MCF 10A (cell line): ENCODE measurements at regions of chr17 and their contacts with region 1.

Region 1: GRCh38 chr17:40362696-40363110 is 1.8 kb downstream of the GJD3 start:
- DNase-seq: peak; percentile 74
- H3K4me3 Mint-ChIP-seq: peak overlapping the region; percentile 69
- H3K27ac Mint-ChIP-seq: no peak overlapping the region
- H3K4me1 Mint-ChIP-seq: peaks cover 11% of the 10 kb centered on the region
- H3K27me3 Mint-ChIP-seq: no peaks in the 10 kb centered on the region
- CTCF ChIP-seq: peak; percentile 72

Region 2: GRCh38 chr17:39621523-39622379 is 741.0 kb before region 1 on chr17:
- CTCF ChIA-PET with region 1: no interaction called
- POLR2A ChIA-PET with region 1: no interaction called
- intact Hi-C with region 1: no loop called
- DNase-seq: peak; percentile 85
- H3K4me3 Mint-ChIP-seq: peak overlapping the region; percentile 9
- H3K27ac Mint-ChIP-seq: no peak overlapping the region
- H3K4me1 Mint-ChIP-seq: peaks cover 9% of the 10 kb centered on the region
- H3K27me3 Mint-ChIP-seq: peaks cover 14% of the 10 kb centered on the region
- CTCF ChIP-seq: peak; percentile 100

Region 3: GRCh38 chr17:40399185-40399584 is 36.5 kb after region 1 on chr17:
- CTCF ChIA-PET with region 1: interaction called, 3 read pairs
- POLR2A ChIA-PET with region 1: no interaction called
- intact Hi-C with region 1: loop called (anchors 1 kb)
- DNase-seq: peak; percentile 61
- H3K4me3 Mint-ChIP-seq: no peak overlapping the region
- H3K27ac Mint-ChIP-seq: no peak overlapping the region
- H3K4me1 Mint-ChIP-seq: peaks cover 6% of the 10 kb centered on the region
- H3K27me3 Mint-ChIP-seq: no peaks in the 10 kb centered on the region
- CTCF ChIP-seq: peak; percentile 46

Region 4: DNA sequence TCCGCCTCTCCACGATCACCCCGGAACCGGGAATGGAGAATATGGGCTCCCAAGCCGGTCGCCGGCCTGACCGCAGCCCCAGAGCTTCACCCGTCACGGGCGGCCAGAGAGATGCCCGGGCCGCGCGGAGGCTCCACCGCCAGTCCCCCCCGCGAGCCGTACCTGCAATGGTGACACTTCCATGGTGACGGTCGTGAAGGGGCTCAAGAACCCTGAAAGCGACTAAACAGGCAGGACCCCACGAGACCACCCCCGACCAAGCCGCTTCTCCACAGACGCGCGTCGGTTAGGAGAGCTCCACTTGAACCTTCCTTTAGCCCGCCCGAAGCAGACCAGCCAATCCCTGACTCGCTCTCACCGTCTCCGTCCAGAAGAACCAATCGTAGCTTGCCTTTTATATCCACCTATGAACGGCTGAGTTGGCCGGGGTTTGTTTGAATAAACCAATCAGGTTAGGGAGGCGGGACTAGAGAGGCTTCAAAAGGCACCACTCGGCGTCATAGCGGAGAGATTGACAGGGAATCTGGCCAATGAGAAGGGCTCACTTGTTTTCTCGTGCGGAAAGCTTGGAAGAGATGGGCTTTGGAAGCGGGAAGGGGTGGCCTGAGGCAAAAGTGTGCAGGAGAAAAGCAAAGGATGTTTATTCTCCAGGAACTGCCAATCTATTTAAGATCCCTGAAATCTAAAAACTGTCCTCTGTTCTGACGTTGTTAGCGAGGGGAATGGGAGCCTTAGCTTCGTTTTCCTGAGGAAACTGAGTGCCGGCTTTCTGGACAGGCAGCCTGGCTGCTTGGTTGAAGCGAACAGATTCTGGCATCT is 55.1 kb after region 1 on chr17 and contains the start of gene TOP2A:
- CTCF ChIA-PET with region 1: interaction called, 23 read pairs
- POLR2A ChIA-PET with region 1: interaction called, 7 read pairs
- intact Hi-C with region 1: loop called (anchors 2 kb)
- DNase-seq: peak; percentile 100
- H3K4me3 Mint-ChIP-seq: peak within 1 kb of the TSS; percentile 96
- H3K27ac Mint-ChIP-seq: peak within 1 kb of the TSS; percentile 82
- H3K4me1 Mint-ChIP-seq: peaks cover 8% of the 10 kb centered on the region
- H3K27me3 Mint-ChIP-seq: no peaks in the 10 kb centered on the region
- CTCF ChIP-seq: no peak
- total RNA-seq, gene TOP2A: 100 and 151 TPM in 2 replicates

Region 5: DNA sequence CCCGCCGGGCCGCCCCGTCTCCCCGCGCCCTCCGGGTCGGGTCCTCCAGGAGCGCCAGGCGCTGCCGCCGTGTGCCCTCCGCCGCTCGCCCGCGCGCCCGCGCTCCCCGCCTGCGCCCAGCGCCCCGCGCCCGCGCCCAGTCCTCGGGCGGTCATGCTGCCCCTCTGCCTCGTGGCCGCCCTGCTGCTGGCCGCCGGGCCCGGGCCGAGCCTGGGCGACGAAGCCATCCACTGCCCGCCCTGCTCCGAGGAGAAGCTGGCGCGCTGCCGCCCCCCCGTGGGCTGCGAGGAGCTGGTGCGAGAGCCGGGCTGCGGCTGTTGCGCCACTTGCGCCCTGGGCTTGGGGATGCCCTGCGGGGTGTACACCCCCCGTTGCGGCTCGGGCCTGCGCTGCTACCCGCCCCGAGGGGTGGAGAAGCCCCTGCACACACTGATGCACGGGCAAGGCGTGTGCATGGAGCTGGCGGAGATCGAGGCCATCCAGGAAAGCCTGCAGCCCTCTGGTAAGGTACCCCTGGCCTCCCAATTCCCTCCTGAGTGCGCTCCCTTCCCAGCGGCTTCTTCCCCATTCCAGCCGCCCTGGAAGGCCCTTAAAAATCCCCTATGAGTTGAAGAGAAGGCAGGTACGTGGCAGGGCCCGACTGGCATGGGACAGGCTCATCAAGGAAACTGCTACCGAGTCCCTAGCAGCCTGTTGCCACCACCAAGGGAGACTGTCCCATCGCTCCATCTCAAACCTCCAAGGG is 81.1 kb after region 1 on chr17:
- CTCF ChIA-PET with region 1: no interaction called
- POLR2A ChIA-PET with region 1: interaction called, 3 read pairs
- intact Hi-C with region 1: loop called (anchors 1 kb)
- DNase-seq: peak; percentile 72
- H3K4me3 Mint-ChIP-seq: peak overlapping the region; percentile 65
- H3K27ac Mint-ChIP-seq: no peak overlapping the region
- H3K4me1 Mint-ChIP-seq: peaks cover 21% of the 10 kb centered on the region
- H3K27me3 Mint-ChIP-seq: peaks cover 31% of the 10 kb centered on the region
- CTCF ChIP-seq: peak; percentile 6